ENCODE measurements at regions of chr17 and their contacts with region 1.

Region 1: GRCh38 chr17:29369831-29370735 is 20.1 kb upstream of the TAOK1 start:
- DNase-seq: peak; percentile 36 to 64 (median 53)
- H3K4me3 ChIP-seq: peak overlapping the region in 1 of 3 experiments; percentile 53
- H3K4me3 Mint-ChIP-seq: no peak overlapping the region
- H3K27ac ChIP-seq: peak overlapping the region in 1 of 2 donors; percentile 21
- H3K27ac Mint-ChIP-seq: no peak overlapping the region
- H3K4me1 ChIP-seq: peaks cover 4 to 8% of the 10 kb centered on the region in 2 donors
- H3K4me1 Mint-ChIP-seq: no peaks in the 10 kb centered on the region
- H3K27me3 ChIP-seq: no peaks in the 10 kb centered on the region
- H3K27me3 Mint-ChIP-seq: no peaks in the 10 kb centered on the region
- CTCF ChIP-seq: peak; percentile 83

Region 2: GRCh38 chr17:29412780-29413565 is 42.9 kb after region 1 on chr17:
- intact Hi-C with region 1: no loop called
- DNase-seq: peak in 2 of 3 donors; percentile 54 to 61
- H3K4me3 ChIP-seq: no peak overlapping the region
- H3K4me3 Mint-ChIP-seq: peak overlapping the region in 1 of 2 donors; percentile 33
- H3K27ac ChIP-seq: peak overlapping the region in 1 of 2 donors; percentile 57
- H3K27ac Mint-ChIP-seq: peak overlapping the region in 5 of 7 donors; percentile 62 to 86 (median 80)
- H3K4me1 ChIP-seq: peaks cover 8 to 13% of the 10 kb centered on the region in 2 donors
- H3K4me1 Mint-ChIP-seq: peaks cover 19% of the 10 kb centered on the region
- H3K27me3 ChIP-seq: no peaks in the 10 kb centered on the region
- H3K27me3 Mint-ChIP-seq: peaks cover 0 to 1% (median 0%) of the 10 kb centered on the region in 3 donors
- CTCF ChIP-seq: no peak

Region 3: GRCh38 chr17:29444589-29444988 is 74.5 kb after region 1 on chr17:
- intact Hi-C with region 1: loop called in 1 of 2 experiments (anchors 10 kb)
- DNase-seq: no peak
- H3K4me3 ChIP-seq: no peak overlapping the region
- H3K4me3 Mint-ChIP-seq: no peak overlapping the region
- H3K27ac ChIP-seq: no peak overlapping the region
- H3K27ac Mint-ChIP-seq: no peak overlapping the region
- H3K4me1 ChIP-seq: no peaks in the 10 kb centered on the region
- H3K4me1 Mint-ChIP-seq: peaks cover 7% of the 10 kb centered on the region
- H3K27me3 ChIP-seq: no peaks in the 10 kb centered on the region
- H3K27me3 Mint-ChIP-seq: peaks cover 0 to 2% (median 0%) of the 10 kb centered on the region in 3 donors
- CTCF ChIP-seq: no peak

Region 4: DNA sequence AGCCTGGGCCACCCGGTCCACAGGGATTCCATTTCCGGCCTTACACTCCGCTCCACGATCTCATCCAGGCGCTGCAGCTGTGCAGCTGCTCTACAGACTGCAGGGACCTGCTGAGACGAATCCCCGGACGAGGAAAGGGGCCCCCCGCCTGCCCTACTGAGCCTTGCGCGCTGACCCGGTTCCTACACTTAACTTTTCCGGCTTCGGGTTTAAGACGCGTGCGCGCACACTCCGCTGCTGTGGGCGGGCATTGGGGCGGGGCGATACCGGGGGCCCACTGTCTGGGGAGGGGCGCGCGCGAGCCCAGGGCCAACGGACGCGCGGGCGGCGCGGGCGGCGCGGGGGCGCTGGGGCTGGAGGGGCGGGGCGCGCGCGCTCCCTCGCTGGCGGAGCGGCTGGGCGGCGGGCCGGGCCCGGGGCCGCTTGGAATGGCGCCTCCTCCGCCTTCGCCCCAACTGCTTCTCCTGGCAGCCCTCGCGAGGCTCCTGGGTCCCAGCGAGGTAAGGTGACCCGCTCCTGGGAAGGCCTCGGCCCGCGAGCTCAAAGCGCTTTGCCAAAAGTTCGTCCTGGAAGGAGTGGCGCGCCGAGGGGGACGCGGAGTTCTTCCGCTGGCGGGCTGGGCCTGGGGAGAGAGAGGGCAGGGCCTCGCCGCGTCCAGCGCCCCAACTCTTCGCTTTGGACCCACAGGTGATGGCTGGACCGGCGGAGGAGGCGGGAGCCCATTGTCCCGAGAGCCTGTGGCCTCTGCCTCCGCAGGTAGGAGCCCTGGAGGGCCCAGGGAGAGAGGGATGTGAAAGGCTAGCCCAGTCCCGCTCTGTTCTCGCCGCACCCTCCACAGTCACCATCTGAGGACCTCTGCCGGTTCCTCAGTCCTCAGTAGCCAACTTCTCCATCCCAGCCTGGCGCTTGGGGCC is 198.5 kb after region 1 on chr17 and contains the start of gene TP53I13:
- intact Hi-C with region 1: loop called in 1 of 2 experiments (anchors 10 kb)
- DNase-seq: peak; percentile 45 to 51 (median 47)
- H3K4me3 ChIP-seq: peak within 1 kb of the TSS; percentile 76 to 97 (median 87)
- H3K4me3 Mint-ChIP-seq: peak within 1 kb of the TSS; percentile 95 to 97
- H3K27ac ChIP-seq: peak within 1 kb of the TSS; percentile 64 to 70
- H3K27ac Mint-ChIP-seq: peak within 1 kb of the TSS; percentile 75 to 95 (median 91)
- H3K4me1 ChIP-seq: peaks cover 32 to 45% of the 10 kb centered on the region in 2 donors
- H3K4me1 Mint-ChIP-seq: peaks cover 40% of the 10 kb centered on the region
- H3K27me3 ChIP-seq: no peaks in the 10 kb centered on the region
- H3K27me3 Mint-ChIP-seq: peaks cover 0 to 7% (median 2%) of the 10 kb centered on the region in 3 donors
- CTCF ChIP-seq: no peak
- polyA plus RNA-seq, gene TP53I13: 9.4 to 58.6 (median 14.4) TPM

Measured in CD14-positive monocyte (primary cell).